ENCODE measurements at regions of chr2 and their contacts with region 1.

Region 1: DNA sequence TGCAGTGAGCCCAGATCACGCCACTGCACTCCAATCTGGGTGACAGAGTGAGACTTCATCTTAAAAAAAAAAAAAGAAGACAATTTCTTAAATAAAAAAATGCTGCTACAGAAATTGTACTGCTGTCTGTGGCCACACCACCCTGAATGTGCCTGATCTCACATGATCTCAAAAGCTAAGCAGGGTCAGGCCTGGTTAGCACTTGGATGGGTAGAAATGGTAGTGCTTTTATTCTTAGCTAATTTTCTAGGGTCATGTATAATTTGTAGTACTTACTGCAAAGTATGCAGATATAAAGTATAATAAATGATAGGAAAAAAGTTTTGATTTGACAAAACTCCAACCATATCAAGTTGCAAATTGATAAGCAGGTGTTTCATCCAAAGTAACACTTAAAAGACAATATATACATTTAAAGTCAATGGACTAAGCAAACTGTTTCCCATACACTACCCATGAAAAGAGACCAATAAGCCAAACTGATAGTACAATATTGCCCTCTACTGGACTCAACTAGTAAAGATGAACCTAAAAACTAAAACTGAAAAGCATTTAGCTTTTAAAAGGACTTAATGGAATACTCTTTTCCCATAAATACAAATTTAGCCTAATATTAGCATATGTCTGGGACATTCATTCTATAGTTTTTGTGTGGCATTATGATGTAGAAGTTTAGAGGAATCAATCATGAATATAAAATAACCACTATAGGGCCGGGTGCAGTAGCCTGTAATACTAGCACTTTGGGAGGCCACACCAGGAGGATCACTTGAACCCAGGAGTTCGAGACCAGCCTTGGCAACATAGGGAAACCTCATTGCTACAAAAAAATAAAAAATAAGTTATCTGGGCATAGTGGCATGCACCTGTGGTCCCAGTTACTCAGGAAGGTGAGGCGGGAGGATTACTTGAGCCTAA is 18.6 kb upstream of the PEX13 start:
- DNase-seq: peak; percentile 54
- CTCF ChIP-seq: peak; percentile 49

Region 2: DNA sequence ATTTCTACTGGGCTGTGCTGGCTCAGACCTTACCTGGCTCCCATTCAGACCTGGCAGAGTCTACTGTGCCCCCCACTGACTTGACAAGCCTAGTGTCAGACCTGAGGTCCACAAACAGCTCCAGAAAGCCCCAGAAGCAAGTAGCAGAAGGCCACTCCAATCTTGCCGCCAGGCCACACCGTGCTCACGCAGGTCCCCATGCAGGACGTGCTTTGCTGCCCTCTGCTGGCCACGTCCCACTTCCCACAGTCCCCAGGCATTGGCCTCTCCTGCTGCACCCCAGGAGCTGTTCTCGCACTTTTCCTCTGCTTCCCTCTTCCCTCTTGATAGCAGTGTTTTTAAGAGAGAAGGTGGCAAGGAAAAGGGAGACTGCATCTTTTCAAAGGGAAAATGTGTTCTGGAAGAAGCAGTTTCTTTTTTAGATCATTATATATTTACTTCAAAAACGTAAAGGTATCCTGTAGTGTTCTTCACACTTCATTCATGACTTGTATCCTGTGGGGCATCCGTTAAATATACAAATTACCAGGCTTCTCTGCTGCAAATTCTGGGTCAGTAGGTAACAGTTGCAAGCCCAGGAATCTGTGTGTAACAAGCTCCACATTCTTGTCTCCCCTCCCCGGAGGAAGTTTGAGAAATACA is 324.2 kb before region 1 on chr2:
- CTCF ChIA-PET with region 1: interaction called, 17 read pairs
- POLR2A ChIA-PET with region 1: no interaction called
- DNase-seq: peak; percentile 88
- CTCF ChIP-seq: peak; percentile 98

Region 3: GRCh38 chr2:60756191-60757041 is 242.5 kb before region 1 on chr2 and contains the start of gene PAPOLG:
- CTCF ChIA-PET with region 1: interaction called, 15 read pairs
- POLR2A ChIA-PET with region 1: no interaction called
- DNase-seq: peak; percentile 98
- CTCF ChIP-seq: no peak

Region 4: GRCh38 chr2:60806988-60807681 is 191.8 kb before region 1 on chr2:
- CTCF ChIA-PET with region 1: interaction called, 51 read pairs
- POLR2A ChIA-PET with region 1: no interaction called
- DNase-seq: peak; percentile 66
- CTCF ChIP-seq: no peak

Region 5: DNA sequence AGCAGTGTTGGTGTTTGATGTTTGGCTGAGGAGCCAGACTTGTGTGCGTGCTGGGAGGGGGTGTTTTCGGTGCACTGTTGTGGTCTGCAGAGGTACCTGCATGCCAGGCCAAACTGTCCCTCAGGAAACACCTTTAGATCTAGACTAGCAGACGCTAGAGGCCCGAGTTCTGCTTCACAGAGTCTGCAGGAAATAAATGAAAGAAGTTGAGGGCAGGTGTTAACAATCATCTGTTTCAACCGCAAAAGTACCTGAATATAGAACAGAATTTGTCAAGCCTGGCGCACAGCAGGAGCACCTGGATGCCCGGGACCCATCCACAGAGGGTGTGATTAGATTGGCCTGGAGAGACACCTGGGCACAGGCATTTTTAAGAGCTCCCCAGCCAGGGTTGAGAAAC is 158.0 kb before region 1 on chr2:
- CTCF ChIA-PET with region 1: interaction called, 12 read pairs
- POLR2A ChIA-PET with region 1: no interaction called
- DNase-seq: no peak
- CTCF ChIP-seq: no peak

Region 6: DNA sequence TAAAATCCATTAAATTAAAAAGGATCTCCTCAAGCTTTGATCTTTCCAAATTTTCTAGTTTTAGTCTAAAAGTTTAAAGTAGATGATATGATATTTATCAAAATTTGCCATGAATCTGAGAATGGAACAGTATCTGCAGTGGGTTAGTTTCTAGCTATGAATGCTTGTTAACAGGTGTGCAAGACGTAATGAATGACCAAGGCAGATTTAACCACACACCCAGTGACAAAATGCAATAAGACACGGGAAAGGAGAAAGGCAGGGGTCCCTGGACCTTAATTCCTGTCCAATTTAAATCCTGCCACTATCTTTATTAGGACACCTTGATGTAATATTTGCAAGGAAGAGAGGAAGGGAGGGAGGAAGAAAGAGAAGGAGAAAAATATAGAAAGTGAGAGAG is 11.8 kb before region 1 on chr2:
- CTCF ChIA-PET with region 1: interaction called, 22 read pairs
- POLR2A ChIA-PET with region 1: no interaction called
- DNase-seq: no peak
- CTCF ChIP-seq: no peak

Region 7: GRCh38 chr2:61090386-61090921 is 91.6 kb after region 1 on chr2:
- CTCF ChIA-PET with region 1: no interaction called
- POLR2A ChIA-PET with region 1: no interaction called
- DNase-seq: no peak
- CTCF ChIP-seq: no peak

Measured in GM10248 (cell line).